ENCODE measurements at regions of chr5 and their contacts with region 1.

Region 1: GRCh38 chr5:120817044-120817985 is 353.2 kb downstream of the PRR16 start:
- DNase-seq: peak; percentile 26
- ATAC-seq: peak; percentile 96
- H3K4me3 Mint-ChIP-seq: no peak overlapping the region
- H3K27ac Mint-ChIP-seq: no peak overlapping the region
- H3K4me1 Mint-ChIP-seq: no peaks in the 10 kb centered on the region
- H3K27me3 Mint-ChIP-seq: no peaks in the 10 kb centered on the region; the same call in 1 of the 2 replicates
- CTCF ChIP-seq: peak; percentile 40

Region 2: GRCh38 chr5:120806202-120806601 is 11.1 kb before region 1 on chr5:
- CTCF ChIA-PET with region 1: interaction called, 20 read pairs
- POLR2A ChIA-PET with region 1: interaction called, 3 read pairs
- DNase-seq: no peak
- ATAC-seq: no peak
- H3K4me3 Mint-ChIP-seq: no peak overlapping the region
- H3K27ac Mint-ChIP-seq: no peak overlapping the region
- H3K4me1 Mint-ChIP-seq: peaks cover 36% of the 10 kb centered on the region
- H3K27me3 Mint-ChIP-seq: no peaks in the 10 kb centered on the region
- CTCF ChIP-seq: no peak

Region 3: DNA sequence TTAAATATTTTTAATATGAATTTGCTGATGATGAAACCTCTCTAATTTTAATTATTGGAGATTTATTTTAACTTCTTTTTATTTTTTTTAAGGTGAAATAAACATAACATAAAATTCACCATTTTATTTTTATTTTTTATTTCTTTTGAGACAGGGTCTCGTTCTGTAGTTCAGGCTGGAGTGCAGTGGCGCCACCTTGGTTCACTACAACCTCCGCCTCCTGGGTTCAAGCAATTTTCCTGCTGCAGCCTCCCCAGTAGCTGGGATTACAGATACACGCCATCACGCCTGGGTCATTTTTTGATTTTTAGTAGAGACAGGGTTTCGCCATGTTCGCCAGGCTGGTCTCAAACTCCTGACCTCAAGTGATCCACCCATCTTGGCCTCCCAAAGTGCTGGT is 49.7 kb after region 1 on chr5:
- CTCF ChIA-PET with region 1: interaction called, 12 read pairs
- POLR2A ChIA-PET with region 1: no interaction called
- DNase-seq: peak; percentile 30
- ATAC-seq: peak; percentile 48; the same call in 1 of the 2 replicates
- H3K4me3 Mint-ChIP-seq: no peak overlapping the region
- H3K27ac Mint-ChIP-seq: no peak overlapping the region
- H3K4me1 Mint-ChIP-seq: peaks cover 26% of the 10 kb centered on the region
- H3K27me3 Mint-ChIP-seq: no peaks in the 10 kb centered on the region
- CTCF ChIP-seq: no peak